Heart right ventricle (tissue), 16 donors: ENCODE measurements at regions of chr12 and their contacts with region 1.

Region 1: GRCh38 chr12:47686645-47687240 is 19.1 kb downstream of the RPAP3 start:
- DNase-seq: no peak
- ATAC-seq: peak in 2 of 8 donors; percentile 61 to 66
- H3K4me3 ChIP-seq: no peak overlapping the region
- H3K27ac ChIP-seq: no peak overlapping the region
- H3K4me1 ChIP-seq: no peaks in the 10 kb centered on the region
- H3K27me3 ChIP-seq: no peaks in the 10 kb centered on the region
- CTCF ChIP-seq: peak in 7 of 9 donors; percentile 52 to 78 (median 63)

Region 2: DNA sequence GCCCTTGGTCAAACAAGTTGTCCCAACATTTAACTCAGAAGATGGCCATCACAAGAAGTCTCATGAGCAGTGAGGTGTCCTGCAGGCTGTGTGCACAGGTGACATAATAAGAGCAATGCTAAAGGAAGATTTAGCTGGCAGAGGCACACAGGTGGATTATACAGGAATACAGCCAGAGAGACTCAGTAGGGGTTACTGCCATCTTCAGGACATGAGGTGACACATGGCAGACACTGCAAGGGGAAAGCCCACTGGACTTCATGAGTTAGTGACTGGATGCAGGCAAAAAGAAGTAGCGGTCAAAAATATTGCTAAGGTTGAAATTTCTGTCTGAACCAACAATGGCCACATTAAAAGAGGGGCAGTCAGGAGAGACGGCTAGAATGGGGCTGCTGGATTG is 29.2 kb before region 1 on chr12:
- intact Hi-C with region 1: loop called in 1 of 10 experiments (anchors 5 kb)
- DNase-seq: no peak
- ATAC-seq: no peak
- H3K4me3 ChIP-seq: no peak overlapping the region
- H3K27ac ChIP-seq: no peak overlapping the region
- H3K4me1 ChIP-seq: peaks cover 0 to 5% (median 2%) of the 10 kb centered on the region in 9 donors
- H3K27me3 ChIP-seq: no peaks in the 10 kb centered on the region
- CTCF ChIP-seq: no peak

Region 3: DNA sequence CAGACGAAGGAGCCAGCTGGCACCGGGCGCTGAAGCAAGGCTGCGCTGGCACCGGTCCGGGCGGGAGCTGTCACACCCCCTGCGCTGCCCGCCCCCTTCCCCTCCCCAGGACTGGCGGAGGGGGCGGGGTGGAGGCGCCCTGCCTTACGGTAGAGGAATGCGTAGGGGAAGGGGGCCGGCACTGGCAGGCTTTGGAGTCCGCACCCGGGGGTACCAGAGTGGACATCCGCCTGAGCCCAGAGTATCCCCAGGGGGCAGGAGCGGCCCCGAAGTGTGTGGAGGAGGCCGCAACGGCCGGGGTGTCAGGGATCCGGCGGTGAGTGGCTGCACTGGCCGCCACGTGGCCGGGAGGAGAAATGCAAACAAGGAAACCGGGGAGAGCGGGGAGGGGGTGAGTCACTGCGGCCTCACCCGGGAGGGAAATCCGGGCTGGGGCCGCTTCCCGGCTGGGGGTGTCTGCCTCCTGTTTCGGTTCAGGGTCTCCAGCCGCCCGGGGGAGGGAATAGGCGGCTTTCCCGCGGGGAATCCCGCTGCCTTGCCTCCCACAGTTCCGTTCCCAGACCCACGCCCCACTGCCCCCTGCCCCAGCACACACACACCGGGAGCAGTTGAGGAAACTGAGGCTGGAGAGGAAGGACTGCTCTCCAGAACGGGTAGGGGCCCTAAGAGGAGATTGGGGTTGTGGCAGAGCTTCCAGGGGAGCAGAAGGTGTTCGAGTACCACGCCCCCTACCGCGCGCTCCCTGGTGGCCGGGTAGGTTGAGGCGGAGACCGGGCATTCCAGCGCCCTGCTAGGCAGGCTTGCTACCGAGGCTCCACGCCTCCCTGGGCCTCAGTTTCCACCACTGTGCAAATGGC is 72.3 kb after region 1 on chr12 and contains the start of gene RAPGEF3:
- intact Hi-C with region 1: no loop called
- DNase-seq: peak; percentile 89
- ATAC-seq: peak; percentile 87 to 92 (median 88)
- H3K4me3 ChIP-seq: peak within 1 kb of the TSS; percentile 34 to 78 (median 59)
- H3K27ac ChIP-seq: peak within 1 kb of the TSS; percentile 72 to 91 (median 86)
- H3K4me1 ChIP-seq: peaks cover 16 to 78% (median 58%) of the 10 kb centered on the region in 9 donors
- H3K27me3 ChIP-seq: no peaks in the 10 kb centered on the region
- CTCF ChIP-seq: peak; percentile 28 to 65 (median 50)
- total RNA-seq, gene RAPGEF3: 9.5 to 54.9 (median 19.8) TPM